Calu3 (cell line): ENCODE measurements at regions of chr10 and their contacts with region 1.

Region 1: DNA sequence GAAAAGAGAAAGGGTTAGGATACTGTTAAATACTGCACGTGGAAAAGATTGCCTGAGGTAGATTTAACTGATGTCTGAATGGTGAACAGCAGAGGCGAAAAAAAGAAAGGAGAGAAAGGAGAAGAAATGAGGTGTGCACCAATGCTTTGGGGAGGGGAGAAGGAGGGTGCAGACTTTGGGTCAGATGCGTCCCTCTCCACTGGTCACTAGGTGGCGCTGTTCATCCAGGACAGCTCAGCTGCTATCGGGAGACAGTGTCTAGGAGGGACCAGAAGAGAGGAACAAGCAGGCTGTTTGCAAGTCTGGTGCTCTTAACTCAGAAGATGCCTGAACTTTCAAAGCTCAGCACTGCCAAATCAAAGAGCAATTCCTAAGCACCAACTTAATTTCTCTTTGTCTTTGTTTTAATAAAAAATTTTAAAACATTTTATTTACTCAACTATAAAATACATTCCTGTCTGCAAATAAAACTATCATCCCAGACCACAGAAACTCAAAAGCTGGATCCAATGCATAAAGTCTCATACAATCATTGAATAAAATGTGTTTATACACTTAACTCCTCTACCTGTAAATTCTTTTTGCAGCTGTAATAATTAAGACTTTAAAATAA is 83.9 kb upstream of the PDLIM1 start:
- DNase-seq: peak; percentile 73
- H3K4me3 Mint-ChIP-seq: no peak overlapping the region
- H3K27ac Mint-ChIP-seq: no peak overlapping the region
- H3K4me1 Mint-ChIP-seq: no peaks in the 10 kb centered on the region
- H3K27me3 Mint-ChIP-seq: peaks cover 22% of the 10 kb centered on the region
- CTCF ChIP-seq: peak; percentile 55

Region 2: DNA sequence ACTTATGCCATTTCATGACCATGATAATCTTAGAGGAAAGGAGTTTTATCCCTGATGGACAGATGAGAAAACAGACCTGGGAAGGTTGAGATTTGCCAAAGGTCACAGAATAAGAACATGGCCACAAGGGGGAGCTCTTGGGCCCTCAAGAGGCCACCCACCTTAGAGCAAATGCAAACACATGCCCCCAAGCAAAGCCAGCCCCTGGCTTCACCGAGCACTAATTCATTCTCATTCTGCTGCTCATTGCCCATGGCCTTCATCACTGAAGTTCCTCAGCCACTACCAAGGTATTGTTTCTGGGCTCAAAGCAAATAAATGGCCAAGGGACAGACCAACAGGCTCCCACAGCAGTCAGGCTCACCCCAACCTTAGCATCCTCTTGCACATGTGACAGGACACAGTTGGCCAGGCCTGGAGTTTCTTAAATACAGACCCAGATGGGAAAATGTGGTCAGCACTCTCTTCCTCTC is 128.1 kb before region 1 on chr10:
- CTCF ChIA-PET with region 1: no interaction called
- intact Hi-C with region 1: no loop called
- DNase-seq: peak; percentile 65
- H3K4me3 Mint-ChIP-seq: no peak overlapping the region
- H3K27ac Mint-ChIP-seq: no peak overlapping the region
- H3K4me1 Mint-ChIP-seq: peaks cover 35% of the 10 kb centered on the region
- H3K27me3 Mint-ChIP-seq: no peaks in the 10 kb centered on the region
- CTCF ChIP-seq: peak; percentile 68

Region 3: GRCh38 chr10:95430231-95430951 is 55.7 kb after region 1 on chr10:
- CTCF ChIA-PET with region 1: interaction called, 7 read pairs
- intact Hi-C with region 1: loop called (anchors 5 kb)
- DNase-seq: peak; percentile 45
- H3K4me3 Mint-ChIP-seq: no peak overlapping the region
- H3K27ac Mint-ChIP-seq: no peak overlapping the region
- H3K4me1 Mint-ChIP-seq: no peaks in the 10 kb centered on the region
- H3K27me3 Mint-ChIP-seq: peaks cover 7% of the 10 kb centered on the region
- CTCF ChIP-seq: peak; percentile 80

Region 4: DNA sequence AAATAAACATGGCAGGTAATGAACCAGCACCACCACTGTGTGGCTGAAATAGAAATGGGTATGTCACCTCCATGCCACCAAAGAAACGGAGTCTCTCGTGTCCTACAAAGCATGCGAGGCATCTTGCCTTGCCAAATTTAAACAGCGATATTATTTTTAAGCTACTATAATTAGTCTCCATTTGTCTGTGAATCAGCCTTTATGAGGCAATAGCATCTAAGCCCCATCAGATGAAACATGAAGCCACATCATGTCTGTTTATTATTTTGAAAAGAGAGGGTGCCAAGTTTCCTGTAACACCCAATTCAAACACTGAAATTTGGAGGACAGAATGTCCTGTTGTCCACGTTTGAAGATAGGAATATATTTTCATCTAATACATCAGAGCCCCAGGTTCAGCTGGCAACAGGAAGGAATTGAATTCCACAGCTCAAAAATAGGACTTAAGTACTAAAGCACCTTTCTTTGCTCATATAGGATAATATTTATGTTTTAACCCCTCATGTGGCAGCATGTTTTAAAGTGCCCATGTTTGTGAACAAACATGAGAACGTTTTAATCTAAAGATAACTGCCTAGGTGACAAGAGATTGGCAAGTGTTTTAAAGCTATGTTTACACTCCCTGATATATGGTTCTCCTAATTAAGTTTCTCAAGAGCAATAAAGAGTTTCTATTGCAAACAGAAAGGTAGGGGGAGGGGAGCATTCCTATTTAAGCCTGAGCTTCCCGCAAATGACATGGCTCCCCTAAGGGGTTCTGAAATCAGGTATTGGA is 99.7 kb after region 1 on chr10:
- CTCF ChIA-PET with region 1: no interaction called
- intact Hi-C with region 1: no loop called
- DNase-seq: no peak
- H3K4me3 Mint-ChIP-seq: no peak overlapping the region
- H3K27ac Mint-ChIP-seq: no peak overlapping the region
- H3K4me1 Mint-ChIP-seq: no peaks in the 10 kb centered on the region
- H3K27me3 Mint-ChIP-seq: no peaks in the 10 kb centered on the region
- CTCF ChIP-seq: no peak

Region 5: DNA sequence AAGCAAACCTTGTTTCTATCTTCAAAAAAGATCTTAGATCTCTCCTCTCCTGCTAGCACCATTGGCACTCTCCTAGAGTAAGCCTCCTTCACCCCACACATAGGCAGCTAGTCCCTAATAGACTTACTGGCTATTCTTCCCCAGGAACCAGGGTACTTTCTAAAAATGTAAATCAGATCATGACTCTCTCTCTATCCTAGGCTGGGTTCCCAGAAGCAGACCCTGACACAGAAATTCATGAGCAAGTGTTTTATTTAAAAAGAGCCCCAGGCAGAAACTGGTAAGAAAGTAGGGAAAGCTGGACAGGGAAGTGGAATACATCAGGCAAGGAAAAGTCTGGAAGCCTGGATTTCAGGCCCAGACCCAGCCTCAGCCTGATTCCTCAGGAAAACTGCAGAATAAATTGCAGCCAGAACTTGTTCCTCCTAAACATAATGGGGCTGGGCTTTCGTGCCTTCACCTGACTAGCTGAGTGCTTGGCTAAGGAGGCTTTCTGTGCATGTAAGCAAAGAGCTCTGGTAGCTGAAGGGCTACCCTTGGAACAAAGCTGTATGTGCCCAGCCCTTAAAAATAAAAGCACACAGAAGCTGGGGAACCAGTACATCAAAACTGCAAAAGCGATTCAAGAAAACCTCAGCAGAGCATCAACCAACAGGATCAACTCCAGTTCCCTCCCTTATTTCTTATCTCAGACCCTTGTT is 205.3 kb after region 1 on chr10:
- CTCF ChIA-PET with region 1: no interaction called
- intact Hi-C with region 1: no loop called
- DNase-seq: no peak
- H3K4me3 Mint-ChIP-seq: no peak overlapping the region
- H3K27ac Mint-ChIP-seq: no peak overlapping the region
- H3K4me1 Mint-ChIP-seq: no peaks in the 10 kb centered on the region
- H3K27me3 Mint-ChIP-seq: peaks cover 61% of the 10 kb centered on the region
- CTCF ChIP-seq: no peak

Region 6: DNA sequence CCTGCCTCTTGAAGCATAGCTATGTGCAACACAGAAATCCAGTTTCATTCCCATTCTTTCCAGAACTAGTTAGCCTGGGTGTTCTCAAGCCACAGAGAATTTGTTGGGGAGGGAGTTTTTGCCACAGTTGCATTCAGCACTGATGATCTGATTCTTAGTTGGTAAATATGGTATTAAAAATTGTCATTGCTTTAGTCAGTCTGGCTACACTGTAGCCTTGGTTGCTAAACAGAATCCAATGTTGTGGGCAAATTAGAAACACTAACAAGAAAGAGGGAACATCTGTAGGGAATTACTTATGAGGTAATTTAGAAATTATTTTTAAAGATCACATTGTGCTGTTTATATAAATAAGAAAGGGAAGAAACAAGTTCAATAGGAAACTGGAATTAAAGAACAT is 476.1 kb after region 1 on chr10:
- CTCF ChIA-PET with region 1: no interaction called
- intact Hi-C with region 1: no loop called
- DNase-seq: no peak
- H3K4me3 Mint-ChIP-seq: no peak overlapping the region
- H3K27ac Mint-ChIP-seq: no peak overlapping the region
- H3K4me1 Mint-ChIP-seq: no peaks in the 10 kb centered on the region
- H3K27me3 Mint-ChIP-seq: peaks cover 12% of the 10 kb centered on the region
- CTCF ChIP-seq: no peak